Dorsolateral prefrontal cortex (tissue), 120 donors: ENCODE measurements at regions of chr12 and their contacts with region 1.

Region 1: DNA sequence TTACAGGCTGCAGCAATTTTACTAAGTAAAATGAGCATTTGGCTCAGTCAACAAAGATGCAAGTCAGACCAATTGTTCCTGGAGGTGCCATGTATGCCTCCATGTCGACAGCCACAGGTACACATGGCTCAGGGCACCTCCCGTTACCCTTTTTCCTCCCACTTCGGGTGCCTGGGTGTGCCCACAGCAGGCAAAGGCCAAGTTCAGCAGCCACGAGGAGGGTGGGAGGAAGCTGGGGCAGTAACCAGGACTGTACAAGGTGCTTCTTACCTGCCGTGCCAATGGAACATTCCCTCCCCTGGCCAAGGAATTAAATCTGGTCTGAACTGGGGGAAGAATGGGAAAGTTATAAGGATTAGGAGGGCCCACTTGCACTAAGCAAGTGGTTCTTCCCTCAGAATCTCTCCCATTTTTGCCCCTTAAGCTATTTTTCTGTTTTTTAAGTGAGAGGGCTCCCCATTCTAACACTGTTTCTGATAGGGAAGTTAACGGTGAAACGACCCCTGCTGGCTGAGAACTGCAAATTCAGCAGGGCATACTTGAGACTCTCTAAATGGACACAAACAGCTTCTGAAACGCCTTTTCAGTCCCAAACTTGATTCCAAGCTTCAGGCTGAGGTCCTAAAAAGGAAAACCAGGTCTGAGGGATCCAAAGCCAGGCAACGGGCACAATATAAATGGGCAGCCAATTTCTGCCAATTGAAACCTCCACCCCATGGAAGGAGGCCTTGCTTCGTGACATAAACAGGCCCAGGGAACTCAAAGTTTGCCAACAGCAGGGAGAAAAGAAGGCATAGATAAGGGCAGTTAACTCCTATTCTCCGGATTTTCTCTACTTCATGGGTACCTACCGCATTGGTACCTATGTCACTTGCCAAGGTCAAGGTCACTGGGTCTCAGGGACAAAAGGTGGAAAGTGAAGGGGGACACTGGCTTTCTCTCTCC is 24.8 kb downstream of the CLECL1 start:
- DNase-seq: peak in 5 of 10 donors; percentile 15 to 59 (median 46)
- H3K4me3 ChIP-seq: no peak overlapping the region
- H3K27ac ChIP-seq: no peak overlapping the region
- H3K27me3 ChIP-seq: peaks cover 0 to 6% (median 0%) of the 10 kb centered on the region in 45 donors
- CTCF ChIP-seq: peak; percentile 44 to 87 (median 73)

Region 2: DNA sequence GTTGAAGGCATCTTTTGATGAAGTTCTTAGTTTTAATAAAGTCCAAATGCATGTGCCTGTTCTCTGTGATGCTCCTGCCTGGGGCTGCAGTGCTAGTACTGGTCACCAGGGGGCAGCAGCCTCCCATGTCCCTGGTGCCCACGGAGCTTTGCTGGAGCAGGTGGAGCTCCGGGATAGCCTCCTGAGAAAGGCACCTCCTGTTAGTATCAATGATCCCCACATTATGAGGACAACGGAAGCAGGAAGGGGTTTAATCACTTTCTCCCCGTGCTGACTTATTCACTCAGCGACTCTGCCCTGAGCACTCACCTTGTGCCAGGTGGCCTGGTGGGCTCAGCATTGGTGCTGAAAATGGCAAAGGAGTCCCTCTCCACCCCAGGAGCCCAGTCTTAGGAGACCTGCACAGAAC is 376.9 kb before region 1 on chr12:
- intact Hi-C with region 1: loop called (anchors 5 to 10 kb)
- DNase-seq: peak; percentile 17 to 87 (median 77)
- H3K4me3 ChIP-seq: no peak overlapping the region
- H3K27ac ChIP-seq: no peak overlapping the region
- H3K27me3 ChIP-seq: no peaks in the 10 kb centered on the region
- CTCF ChIP-seq: peak; percentile 75 to 99 (median 94)

Region 3: GRCh38 chr12:9634177-9634803 is 73.8 kb before region 1 on chr12:
- intact Hi-C with region 1: loop called in 1 of 2 experiments (anchors 2 kb)
- DNase-seq: peak in 2 of 10 donors; percentile 16 to 38
- H3K4me3 ChIP-seq: no peak overlapping the region
- H3K27ac ChIP-seq: no peak overlapping the region
- H3K27me3 ChIP-seq: no peaks in the 10 kb centered on the region
- CTCF ChIP-seq: peak; percentile 35 to 76 (median 64)